Sigmoid colon (tissue), 7 donors: ENCODE measurements at regions of chr12 and their contacts with region 1.

Region 1: DNA sequence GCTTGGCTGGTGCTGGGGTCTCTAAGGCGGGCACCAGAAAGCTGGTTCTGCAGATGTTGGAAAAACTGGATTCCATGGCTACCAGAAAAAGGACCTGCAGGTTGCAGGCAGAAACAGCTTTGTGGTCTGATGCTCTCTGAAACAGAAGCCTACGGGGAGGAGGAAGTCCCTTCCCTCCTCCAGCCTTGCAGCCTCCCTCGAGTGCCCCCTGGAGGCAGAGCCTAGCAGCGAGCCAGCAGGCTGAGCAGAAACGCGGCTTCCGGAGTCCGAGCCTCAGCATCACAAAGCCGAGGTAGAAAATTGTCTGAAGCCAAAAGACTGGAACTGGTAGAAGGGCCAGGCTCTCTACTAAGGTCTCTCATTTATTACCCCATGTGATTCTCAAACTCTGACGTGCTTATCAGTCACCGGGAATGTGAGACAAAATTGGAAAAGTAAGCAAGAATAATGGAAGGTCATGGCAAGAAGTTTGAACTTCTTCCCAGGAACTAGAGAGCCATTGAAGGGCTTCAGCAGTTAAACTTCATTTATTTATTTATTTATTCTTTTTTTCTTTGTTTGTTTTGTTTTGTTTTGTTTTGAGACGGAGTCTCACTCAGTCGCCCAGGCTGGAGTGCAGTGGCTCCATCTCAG is 82.2 kb upstream of the CPSF6 start:
- DNase-seq: peak; percentile 86
- H3K4me3 ChIP-seq: no peak overlapping the region
- H3K27ac ChIP-seq: no peak overlapping the region
- H3K4me1 ChIP-seq: peaks cover 0 to 6% (median 0%) of the 10 kb centered on the region in 4 donors
- H3K27me3 ChIP-seq: no peaks in the 10 kb centered on the region
- CTCF ChIP-seq: peak in 3 of 4 experiments; percentile 44 to 82 (median 54)
- EP300 ChIP-seq: no peak
- POLR2A ChIP-seq: no peak

Region 2: GRCh38 chr12:69239352-69239921 is 82.3 kb after region 1 on chr12 and contains the start of gene CPSF6:
- intact Hi-C with region 1: loop called (anchors 5 kb)
- DNase-seq: peak; percentile 97
- H3K4me3 ChIP-seq: peak within 1 kb of the TSS; percentile 54 to 94 (median 90)
- H3K27ac ChIP-seq: peak within 1 kb of the TSS; percentile 89 to 97 (median 95)
- H3K4me1 ChIP-seq: peaks cover 0 to 49% (median 43%) of the 10 kb centered on the region in 4 donors
- H3K27me3 ChIP-seq: no peaks in the 10 kb centered on the region
- CTCF ChIP-seq: no peak
- EP300 ChIP-seq: no peak
- POLR2A ChIP-seq: peak; percentile 72 to 79
- total RNA-seq, gene CPSF6: 33.5 to 96.0 (median 34.8) TPM

Region 3: GRCh38 chr12:69254046-69254445 is 96.9 kb after region 1 on chr12:
- intact Hi-C with region 1: loop called (anchors 2 kb)
- DNase-seq: no peak
- H3K4me3 ChIP-seq: no peak overlapping the region
- H3K27ac ChIP-seq: no peak overlapping the region
- H3K4me1 ChIP-seq: peaks cover 0 to 32% (median 13%) of the 10 kb centered on the region in 4 donors
- H3K27me3 ChIP-seq: no peaks in the 10 kb centered on the region
- CTCF ChIP-seq: peak; percentile 14 to 66 (median 44)
- EP300 ChIP-seq: no peak
- POLR2A ChIP-seq: no peak